ENCODE measurements at regions of chr3 and their contacts with region 1.

Region 1: DNA sequence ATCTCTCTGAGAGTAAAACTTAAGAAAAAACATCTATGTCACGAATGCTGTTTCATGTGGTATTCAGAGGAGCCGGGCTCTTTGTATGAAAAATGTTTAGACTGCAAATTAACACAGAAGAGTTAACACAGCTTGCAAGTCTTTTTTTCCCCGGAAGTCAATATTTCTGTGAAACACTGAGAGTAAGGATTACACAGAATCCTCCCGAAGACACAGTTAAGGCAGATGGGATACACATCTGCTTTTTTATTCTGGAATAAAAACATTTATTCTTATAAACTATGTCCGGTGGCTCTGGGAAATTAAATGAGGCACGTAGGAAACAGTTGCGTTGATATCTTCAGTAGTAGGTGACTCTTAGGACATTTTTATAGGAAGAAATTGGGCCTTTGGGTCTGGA is 180.6 kb downstream of the PTPRG start:
- DNase-seq: no peak
- ATAC-seq: no peak
- H3K4me3 ChIP-seq: no peak overlapping the region
- H3K27ac ChIP-seq: no peak overlapping the region
- H3K4me1 ChIP-seq: peaks cover 18% of the 10 kb centered on the region
- H3K27me3 ChIP-seq: no peaks in the 10 kb centered on the region
- CTCF ChIP-seq: no peak

Region 2: GRCh38 chr3:61589856-61590255 is 152.1 kb before region 1 on chr3:
- intact Hi-C with region 1: no loop called
- DNase-seq: no peak
- ATAC-seq: peak; percentile 31 to 88 (median 76)
- H3K4me3 ChIP-seq: no peak overlapping the region
- H3K27ac ChIP-seq: no peak overlapping the region
- H3K4me1 ChIP-seq: peaks cover 22% of the 10 kb centered on the region
- H3K27me3 ChIP-seq: no peaks in the 10 kb centered on the region
- CTCF ChIP-seq: no peak

Region 3: GRCh38 chr3:61807865-61808276 is 65.9 kb after region 1 on chr3:
- intact Hi-C with region 1: loop called in 1 of 2 experiments (anchors 10 kb)
- DNase-seq: no peak
- ATAC-seq: no peak
- H3K4me3 ChIP-seq: no peak overlapping the region
- H3K27ac ChIP-seq: peak overlapping the region; percentile 10
- H3K4me1 ChIP-seq: peaks cover 73% of the 10 kb centered on the region
- H3K27me3 ChIP-seq: no peaks in the 10 kb centered on the region
- CTCF ChIP-seq: no peak